ENCODE measurements at regions of chr4 and their contacts with region 1.

Region 1: DNA sequence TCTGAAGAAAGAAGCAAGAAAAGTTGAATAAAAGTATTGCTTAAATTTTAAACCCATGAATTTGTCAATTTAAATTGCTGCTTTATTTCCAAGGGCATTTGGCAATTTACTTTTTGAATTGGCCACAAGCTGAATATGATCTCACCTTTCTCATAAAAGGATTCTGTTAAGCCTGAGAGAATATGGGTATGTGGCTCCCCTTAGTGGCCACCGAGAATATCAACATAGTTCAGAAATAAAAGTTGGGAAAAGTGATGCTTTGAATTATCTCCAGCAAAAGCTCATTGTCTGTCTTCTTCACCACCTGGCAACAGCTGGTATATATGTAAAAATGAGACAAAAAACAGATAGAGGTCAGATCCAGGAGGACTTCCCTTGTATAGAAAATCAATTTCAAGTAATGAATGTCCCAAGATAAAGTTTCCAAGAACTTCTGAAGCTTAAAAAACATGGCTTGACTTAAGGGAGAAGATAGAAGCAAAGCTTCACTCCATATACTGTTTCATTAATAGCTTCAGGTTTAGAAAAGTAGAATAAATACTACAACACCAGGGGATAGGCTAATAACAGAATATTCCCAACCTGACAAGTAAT is 290.7 kb upstream of the FAM241A start:
- DNase-seq: no peak
- H3K4me3 Mint-ChIP-seq: no peak overlapping the region
- H3K27ac Mint-ChIP-seq: no peak overlapping the region
- H3K4me1 Mint-ChIP-seq: no peaks in the 10 kb centered on the region
- H3K27me3 Mint-ChIP-seq: no peaks in the 10 kb centered on the region

Region 2: DNA sequence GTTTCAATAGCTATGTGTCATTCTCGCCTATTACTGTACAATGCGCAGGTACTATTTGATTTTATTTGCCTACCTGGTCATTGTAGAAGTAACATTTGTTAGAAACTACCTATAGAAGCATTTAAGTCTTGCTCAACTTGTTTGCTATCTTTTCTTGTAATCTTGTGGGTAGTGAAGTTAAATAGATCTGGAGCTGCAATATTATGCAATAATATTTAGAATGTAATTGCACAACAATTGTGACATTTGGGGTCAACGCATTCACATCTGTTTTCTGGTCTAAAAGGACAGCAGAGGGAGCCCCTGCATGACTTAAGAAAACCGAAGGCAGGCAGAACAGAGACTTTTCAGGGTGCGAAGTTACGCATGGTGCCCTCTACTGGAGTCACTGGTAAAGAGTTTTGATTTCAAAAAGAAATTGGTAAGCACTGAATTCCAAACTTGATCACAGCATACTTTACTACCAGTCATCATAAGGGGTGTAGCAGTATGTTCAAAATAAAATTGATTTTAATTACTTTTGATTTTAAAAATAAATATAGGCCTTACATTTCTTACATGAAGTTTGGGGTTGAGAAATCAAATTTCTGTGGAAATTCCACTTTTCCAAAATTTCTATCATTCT is 212.5 kb before region 1 on chr4:
- CTCF ChIA-PET with region 1: no interaction called
- POLR2A ChIA-PET with region 1: no interaction called
- intact Hi-C with region 1: loop called (anchors 1 kb)
- DNase-seq: peak; percentile 35
- H3K4me3 Mint-ChIP-seq: no peak overlapping the region
- H3K27ac Mint-ChIP-seq: no peak overlapping the region
- H3K4me1 Mint-ChIP-seq: no peaks in the 10 kb centered on the region
- H3K27me3 Mint-ChIP-seq: no peaks in the 10 kb centered on the region